CD4-positive, alpha-beta memory T cell (primary cell): ENCODE measurements at regions of chr11 and their contacts with region 1.

Region 1: GRCh38 chr11:133927690-133928627 is 28.8 kb downstream of the IGSF9B start:
- DNase-seq: peak; percentile 64 to 79 (median 74)
- H3K4me3 ChIP-seq: peak overlapping the region in 1 of 2 donors; percentile 62
- H3K4me3 Mint-ChIP-seq: peak overlapping the region; percentile 85 to 96 (median 92)
- H3K27ac ChIP-seq: peak overlapping the region; percentile 44
- H3K27ac Mint-ChIP-seq: peak overlapping the region; percentile 49 to 95 (median 91)
- H3K4me1 ChIP-seq: peaks cover 28% of the 10 kb centered on the region
- H3K4me1 Mint-ChIP-seq: peaks cover 15 to 36% (median 20%) of the 10 kb centered on the region in 4 donors
- H3K27me3 ChIP-seq: no peaks in the 10 kb centered on the region
- H3K27me3 Mint-ChIP-seq: no peaks in the 10 kb centered on the region

Region 2: DNA sequence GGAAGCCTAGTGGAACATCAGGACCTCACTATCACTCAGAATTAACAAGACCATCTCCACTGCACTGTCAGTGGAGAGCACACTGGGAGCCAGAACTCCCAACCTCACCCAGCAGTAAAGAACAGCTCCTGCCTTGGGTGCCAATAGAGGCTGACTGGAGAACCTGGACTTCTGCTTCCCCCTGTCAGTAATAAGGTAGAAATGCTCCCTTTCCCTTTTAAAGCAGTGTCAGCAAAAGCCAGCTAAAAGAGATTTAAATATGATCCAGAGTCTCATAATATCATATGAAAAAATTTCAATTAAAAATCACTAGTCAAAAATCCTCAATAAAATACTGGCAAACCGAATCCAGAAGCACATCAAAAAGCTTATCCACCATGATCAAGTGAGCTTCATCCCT is 165.4 kb before region 1 on chr11:
- CTCF ChIA-PET with region 1: no interaction called
- POLR2A ChIA-PET with region 1: no interaction called
- intact Hi-C with region 1: no loop called
- DNase-seq: no peak
- H3K4me3 ChIP-seq: no peak overlapping the region
- H3K4me3 Mint-ChIP-seq: no peak overlapping the region
- H3K27ac ChIP-seq: no peak overlapping the region
- H3K27ac Mint-ChIP-seq: no peak overlapping the region
- H3K4me1 ChIP-seq: no peaks in the 10 kb centered on the region
- H3K4me1 Mint-ChIP-seq: no peaks in the 10 kb centered on the region
- H3K27me3 ChIP-seq: no peaks in the 10 kb centered on the region
- H3K27me3 Mint-ChIP-seq: peaks cover 0 to 3% of the 10 kb centered on the region in 2 donors

Region 3: GRCh38 chr11:133956650-133957633 is 29.0 kb after region 1 on chr11 and contains the start of gene IGSF9B:
- CTCF ChIA-PET with region 1: interaction called, 29 read pairs
- POLR2A ChIA-PET with region 1: interaction called, 25 read pairs
- intact Hi-C with region 1: loop called (anchors 1 kb)
- DNase-seq: peak; percentile 89 to 96 (median 92)
- H3K4me3 ChIP-seq: peak within 1 kb of the TSS; percentile 57 to 95
- H3K4me3 Mint-ChIP-seq: peak within 1 kb of the TSS; percentile 89 to 95 (median 92)
- H3K27ac ChIP-seq: peak within 1 kb of the TSS; percentile 58
- H3K27ac Mint-ChIP-seq: peak within 1 kb of the TSS; percentile 84 to 94 (median 90)
- H3K4me1 ChIP-seq: peaks cover 38% of the 10 kb centered on the region
- H3K4me1 Mint-ChIP-seq: peaks cover 24 to 48% (median 40%) of the 10 kb centered on the region in 4 donors
- H3K27me3 ChIP-seq: peaks cover 5% of the 10 kb centered on the region
- H3K27me3 Mint-ChIP-seq: peaks cover 7 to 10% of the 10 kb centered on the region in 2 donors
- total RNA-seq, gene IGSF9B: 36.0 to 38.6 TPM

Region 4: GRCh38 chr11:134068829-134069425 is 141.0 kb after region 1 on chr11 and contains the start of gene JAM3:
- CTCF ChIA-PET with region 1: interaction called, 14 read pairs
- POLR2A ChIA-PET with region 1: interaction called, 8 read pairs
- intact Hi-C with region 1: no loop called
- DNase-seq: peak; percentile 96 to 98 (median 97)
- H3K4me3 ChIP-seq: peak within 1 kb of the TSS in 1 of 2 donors; percentile 48
- H3K4me3 Mint-ChIP-seq: peak within 1 kb of the TSS; percentile 87 to 95 (median 92)
- H3K27ac ChIP-seq: no peak within 1 kb of the TSS
- H3K27ac Mint-ChIP-seq: peak within 1 kb of the TSS; percentile 72 to 98 (median 97)
- H3K4me1 ChIP-seq: peaks cover 7% of the 10 kb centered on the region
- H3K4me1 Mint-ChIP-seq: peaks cover 5 to 14% (median 9%) of the 10 kb centered on the region in 4 donors
- H3K27me3 ChIP-seq: no peaks in the 10 kb centered on the region
- H3K27me3 Mint-ChIP-seq: peaks cover 2 to 5% of the 10 kb centered on the region in 2 donors
- total RNA-seq, gene JAM3: 6.8 to 8.3 TPM

Region 5: GRCh38 chr11:134139873-134140331 is 211.9 kb after region 1 on chr11:
- CTCF ChIA-PET with region 1: interaction called, 31 read pairs
- POLR2A ChIA-PET with region 1: interaction called, 3 read pairs
- intact Hi-C with region 1: no loop called
- DNase-seq: peak; percentile 46 to 52 (median 50)
- H3K4me3 ChIP-seq: no peak overlapping the region
- H3K4me3 Mint-ChIP-seq: no peak overlapping the region
- H3K27ac ChIP-seq: no peak overlapping the region
- H3K27ac Mint-ChIP-seq: no peak overlapping the region
- H3K4me1 ChIP-seq: no peaks in the 10 kb centered on the region
- H3K4me1 Mint-ChIP-seq: peaks cover 0 to 8% (median 5%) of the 10 kb centered on the region in 4 donors
- H3K27me3 ChIP-seq: no peaks in the 10 kb centered on the region
- H3K27me3 Mint-ChIP-seq: no peaks in the 10 kb centered on the region

Region 6: GRCh38 chr11:134196756-134197155 is 268.8 kb after region 1 on chr11:
- CTCF ChIA-PET with region 1: no interaction called
- POLR2A ChIA-PET with region 1: no interaction called
- intact Hi-C with region 1: no loop called
- DNase-seq: peak in 4 of 5 donors; percentile 9 to 31 (median 21)
- H3K4me3 ChIP-seq: no peak overlapping the region
- H3K4me3 Mint-ChIP-seq: peak overlapping the region in 7 of 8 donors; percentile 40 to 82 (median 49)
- H3K27ac ChIP-seq: no peak overlapping the region
- H3K27ac Mint-ChIP-seq: peak overlapping the region in 6 of 7 donors; percentile 76 to 96 (median 84)
- H3K4me1 ChIP-seq: peaks cover 3% of the 10 kb centered on the region
- H3K4me1 Mint-ChIP-seq: peaks cover 6 to 10% (median 8%) of the 10 kb centered on the region in 4 donors
- H3K27me3 ChIP-seq: no peaks in the 10 kb centered on the region
- H3K27me3 Mint-ChIP-seq: no peaks in the 10 kb centered on the region